ENCODE measurements at regions of chr1 and their contacts with region 1.

Region 1: DNA sequence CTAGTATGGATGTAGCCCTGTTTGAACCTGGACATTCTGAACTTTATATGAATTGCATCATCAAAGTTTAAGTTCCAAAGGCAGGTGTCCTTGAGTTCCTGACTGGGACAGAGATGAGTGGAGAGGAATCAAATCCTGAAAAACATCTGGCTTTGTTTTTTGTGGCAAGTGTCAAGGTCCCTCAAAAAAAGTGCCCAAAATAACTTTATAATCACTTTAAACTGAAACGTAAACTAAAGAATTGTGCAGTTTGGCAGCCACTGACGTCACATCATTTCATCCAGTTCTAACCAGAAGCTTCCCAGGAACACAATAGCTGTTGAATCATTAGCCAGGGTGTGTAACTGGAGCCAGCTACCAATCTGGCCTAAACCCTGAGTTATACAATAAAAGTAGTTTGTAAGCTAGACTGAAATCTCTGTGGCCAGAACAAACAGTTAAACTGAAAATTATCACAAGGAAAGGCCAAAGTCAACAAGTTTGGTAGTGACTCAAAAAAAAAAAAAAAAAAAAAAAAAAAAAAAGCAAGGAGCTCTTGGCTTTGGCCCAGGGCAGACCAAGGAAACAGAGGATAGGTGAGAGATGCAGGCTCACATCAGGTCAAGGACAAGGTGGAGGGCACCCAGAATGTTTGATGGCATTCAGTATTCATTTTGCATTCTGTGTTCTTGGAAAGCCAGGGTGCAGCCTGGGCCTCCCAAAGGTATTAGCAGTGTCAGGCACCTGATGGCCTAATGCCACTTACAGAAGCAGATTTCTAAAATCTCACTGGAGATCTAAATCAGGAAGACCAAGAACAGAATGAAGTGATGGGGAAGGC is 74.3 kb downstream of the TNFSF18 start:
- DNase-seq: peak; percentile 100
- ATAC-seq: peak; percentile 99
- H3K4me3 ChIP-seq: peak overlapping the region; percentile 1; the same call in 1 of the 2 replicates
- H3K27ac ChIP-seq: peak overlapping the region; percentile 71
- H3K4me1 ChIP-seq: peaks cover 30% of the 10 kb centered on the region
- H3K27me3 ChIP-seq: no peaks in the 10 kb centered on the region
- CTCF ChIP-seq: no peak

Region 2: DNA sequence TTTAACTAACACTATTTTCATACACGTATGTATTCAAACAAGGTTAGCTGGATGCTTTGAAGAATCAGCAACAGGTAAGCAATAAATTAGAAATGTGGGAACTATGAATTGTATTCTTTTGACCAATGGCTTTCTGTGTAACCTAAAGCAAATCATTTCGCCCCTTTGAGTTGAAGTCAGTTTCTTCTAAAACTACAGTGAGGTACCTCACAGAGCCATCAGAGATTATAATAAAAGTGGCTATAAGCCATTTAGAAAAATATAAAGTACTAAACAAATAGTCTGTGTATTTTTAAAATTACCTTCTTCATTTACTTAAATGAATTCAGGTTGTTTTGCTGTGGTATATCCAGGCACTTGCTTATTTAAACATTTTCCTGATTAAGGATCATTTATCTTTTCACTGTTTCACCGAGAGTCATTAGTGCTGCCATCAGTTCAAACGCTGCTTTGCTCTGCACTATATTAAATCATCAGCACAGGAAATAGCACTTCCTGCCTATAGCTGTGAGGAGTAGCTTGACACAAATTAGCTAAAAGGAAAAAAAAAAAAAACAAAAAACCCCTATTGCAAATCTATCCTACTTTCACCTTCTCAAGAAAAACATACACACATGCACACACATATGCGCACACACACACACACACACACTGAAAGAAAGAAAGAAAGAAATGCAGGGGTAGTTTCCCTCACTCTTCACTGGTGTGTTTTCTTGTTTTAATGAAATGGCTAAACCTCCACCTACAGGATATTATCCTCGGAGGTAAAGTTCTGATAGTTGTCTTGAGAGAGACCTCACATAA is 595.8 kb before region 1 on chr1:
- CTCF ChIA-PET with region 1: no interaction called
- POLR2A ChIA-PET with region 1: no interaction called
- intact Hi-C with region 1: no loop called
- DNase-seq: no peak
- ATAC-seq: peak; percentile 43; the same call in 1 of the 2 replicates
- H3K4me3 ChIP-seq: no peak overlapping the region
- H3K27ac ChIP-seq: no peak overlapping the region
- H3K4me1 ChIP-seq: no peaks in the 10 kb centered on the region
- H3K27me3 ChIP-seq: no peaks in the 10 kb centered on the region
- CTCF ChIP-seq: no peak

Region 3: DNA sequence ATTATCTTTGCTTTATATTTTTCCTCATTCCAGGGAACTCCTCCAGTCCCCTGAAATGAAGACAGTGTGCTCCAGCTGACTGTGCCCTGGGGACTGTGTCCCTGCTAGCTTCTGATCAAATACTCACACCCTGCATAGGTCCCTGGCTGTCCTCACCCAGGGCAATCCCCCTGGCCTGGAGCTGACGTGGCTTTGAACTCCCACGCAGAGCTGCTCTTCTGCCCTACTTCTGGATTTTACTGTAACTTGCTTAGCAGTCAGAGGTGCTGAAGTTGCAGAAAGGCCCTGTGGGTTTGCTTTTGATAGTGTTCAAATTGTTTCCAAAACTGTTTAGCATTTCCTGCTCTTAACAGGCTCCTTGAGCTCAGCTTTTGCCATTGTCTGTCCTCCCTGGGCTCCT is 131.1 kb before region 1 on chr1:
- CTCF ChIA-PET with region 1: no interaction called
- POLR2A ChIA-PET with region 1: no interaction called
- intact Hi-C with region 1: no loop called
- DNase-seq: no peak
- ATAC-seq: no peak
- H3K4me3 ChIP-seq: no peak overlapping the region
- H3K27ac ChIP-seq: no peak overlapping the region
- H3K4me1 ChIP-seq: no peaks in the 10 kb centered on the region
- H3K27me3 ChIP-seq: no peaks in the 10 kb centered on the region
- CTCF ChIP-seq: no peak

Region 4: GRCh38 chr1:172863031-172863430 is 113.4 kb before region 1 on chr1:
- CTCF ChIA-PET with region 1: interaction called, 5 read pairs
- POLR2A ChIA-PET with region 1: interaction called, 36 read pairs
- intact Hi-C with region 1: loop called (anchors 1 kb)
- DNase-seq: peak; percentile 30
- ATAC-seq: no peak
- H3K4me3 ChIP-seq: no peak overlapping the region
- H3K27ac ChIP-seq: no peak overlapping the region
- H3K4me1 ChIP-seq: peaks cover 9% of the 10 kb centered on the region
- H3K27me3 ChIP-seq: no peaks in the 10 kb centered on the region
- CTCF ChIP-seq: no peak

Region 5: GRCh38 chr1:172906778-172907592 is 69.4 kb before region 1 on chr1:
- CTCF ChIA-PET with region 1: interaction called, 13 read pairs
- POLR2A ChIA-PET with region 1: interaction called, 4 read pairs
- intact Hi-C with region 1: loop called (anchors 1 kb)
- DNase-seq: peak; percentile 99
- ATAC-seq: peak; percentile 25
- H3K4me3 ChIP-seq: no peak overlapping the region; the same call in 1 of the 2 replicates
- H3K27ac ChIP-seq: peak overlapping the region; percentile 77
- H3K4me1 ChIP-seq: peaks cover 64% of the 10 kb centered on the region
- H3K27me3 ChIP-seq: no peaks in the 10 kb centered on the region
- CTCF ChIP-seq: no peak

Region 6: DNA sequence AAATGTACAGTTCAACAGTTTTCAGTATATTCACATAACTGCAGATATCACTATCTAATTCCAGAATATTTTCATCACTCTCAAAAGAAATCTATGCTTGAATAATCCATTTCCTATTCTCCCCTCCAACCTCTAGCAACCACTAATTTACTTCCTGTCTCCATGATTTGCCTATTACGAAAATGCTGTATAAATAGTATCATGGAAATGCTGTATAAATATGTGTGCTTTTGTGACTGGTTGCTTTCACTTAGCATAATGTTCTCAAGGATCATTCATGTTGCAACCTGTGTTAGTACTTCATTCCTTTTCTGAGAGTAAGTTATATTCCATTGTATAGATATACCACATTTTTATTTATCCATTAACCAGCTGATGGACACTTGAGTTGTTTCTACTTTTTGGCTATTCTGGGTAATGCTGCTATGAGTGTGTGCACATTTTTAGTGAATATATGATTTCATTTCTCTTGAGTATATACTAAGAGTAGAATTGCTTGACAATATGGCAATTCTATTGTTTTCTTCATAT is 41.3 kb before region 1 on chr1:
- CTCF ChIA-PET with region 1: no interaction called
- POLR2A ChIA-PET with region 1: interaction called, 3 read pairs
- intact Hi-C with region 1: loop called (anchors 1 kb)
- DNase-seq: no peak
- ATAC-seq: no peak
- H3K4me3 ChIP-seq: no peak overlapping the region
- H3K27ac ChIP-seq: peak overlapping the region; percentile 70
- H3K4me1 ChIP-seq: peaks cover 34% of the 10 kb centered on the region
- H3K27me3 ChIP-seq: no peaks in the 10 kb centered on the region
- CTCF ChIP-seq: no peak

Region 7: DNA sequence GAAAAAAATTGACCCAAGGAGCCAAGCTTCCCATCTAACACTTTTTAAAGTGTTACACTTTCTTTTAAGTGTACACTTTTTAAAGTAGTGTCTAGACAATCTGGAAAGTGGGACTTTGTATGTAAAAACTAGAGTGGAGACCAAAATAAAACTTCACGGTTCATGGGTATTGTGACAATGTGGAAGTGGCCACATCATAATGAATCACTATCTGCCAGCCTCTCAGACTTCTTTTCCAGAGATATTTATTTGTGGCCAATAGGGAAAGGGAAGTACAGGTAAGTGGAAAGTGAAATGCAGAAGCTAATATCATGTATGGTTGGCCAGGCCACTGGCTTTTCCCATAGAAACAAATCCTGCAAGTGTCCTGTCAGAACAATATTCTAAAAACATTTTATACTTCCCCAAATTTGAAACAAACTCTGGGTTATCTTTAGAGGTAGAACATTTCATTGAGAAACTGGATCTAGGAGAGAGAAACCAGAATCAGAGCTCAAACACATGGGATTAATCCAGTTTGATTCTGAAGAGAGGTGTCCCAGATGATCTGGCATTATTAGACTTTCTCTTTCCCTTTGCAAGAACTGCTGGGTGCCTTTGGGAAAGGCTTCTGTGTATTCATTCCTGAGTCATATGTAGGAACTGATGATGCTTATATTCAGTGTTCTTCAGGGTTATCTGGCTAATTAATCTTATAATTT is 72.3 kb after region 1 on chr1:
- CTCF ChIA-PET with region 1: no interaction called
- POLR2A ChIA-PET with region 1: no interaction called
- intact Hi-C with region 1: loop called (anchors 1 kb)
- DNase-seq: peak; percentile 98
- ATAC-seq: peak; percentile 85
- H3K4me3 ChIP-seq: no peak overlapping the region
- H3K27ac ChIP-seq: peak overlapping the region; percentile 51
- H3K4me1 ChIP-seq: peaks cover 55% of the 10 kb centered on the region
- H3K27me3 ChIP-seq: no peaks in the 10 kb centered on the region
- CTCF ChIP-seq: no peak

Region 8: GRCh38 chr1:173202430-173203145 is 226.2 kb after region 1 on chr1:
- CTCF ChIA-PET with region 1: interaction called, 10 read pairs
- POLR2A ChIA-PET with region 1: no interaction called
- intact Hi-C with region 1: loop called (anchors 5 kb)
- DNase-seq: peak; percentile 98
- ATAC-seq: peak; percentile 93
- H3K4me3 ChIP-seq: no peak overlapping the region
- H3K27ac ChIP-seq: no peak overlapping the region
- H3K4me1 ChIP-seq: 0 out of 2 replicates have a peak, but pooled peaks cover 4% of the 10 kb centered on the region
- H3K27me3 ChIP-seq: no peaks in the 10 kb centered on the region
- CTCF ChIP-seq: peak; percentile 100

Region 9: DNA sequence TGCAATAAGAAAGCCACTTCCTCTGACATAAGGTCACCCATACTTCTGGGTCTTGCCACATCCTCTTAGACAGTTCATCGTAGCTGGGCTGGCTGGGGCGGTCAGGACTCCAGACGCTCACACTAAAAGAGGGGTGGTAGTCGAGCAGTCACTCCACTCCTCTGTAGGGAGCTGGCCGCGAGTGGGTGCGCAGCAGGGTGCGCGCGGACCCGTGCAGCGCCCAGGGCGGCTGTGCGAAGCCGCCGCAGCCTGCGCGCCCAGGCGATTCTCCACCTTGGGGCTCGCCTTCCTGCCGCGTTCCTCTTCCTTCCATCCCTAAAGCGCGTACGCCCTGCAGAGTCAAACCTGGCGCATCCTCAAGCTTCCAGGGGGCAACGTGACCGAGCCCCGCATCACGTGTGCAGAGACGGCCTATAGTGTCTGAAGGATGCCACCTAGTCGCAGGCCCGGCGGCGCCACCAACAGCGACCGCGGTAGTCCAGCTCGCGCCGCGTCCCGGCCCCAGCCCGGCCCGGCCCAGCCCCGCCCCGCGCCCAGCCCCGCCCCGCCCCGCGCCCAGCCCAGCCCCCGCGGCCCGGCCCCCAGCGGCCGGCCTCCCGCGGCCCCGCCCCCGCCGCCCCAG is 500.3 kb after region 1 on chr1:
- CTCF ChIA-PET with region 1: no interaction called
- POLR2A ChIA-PET with region 1: interaction called, 14 read pairs
- intact Hi-C with region 1: no loop called
- DNase-seq: peak; percentile 100
- ATAC-seq: peak; percentile 77
- H3K4me3 ChIP-seq: peak overlapping the region; percentile 74
- H3K27ac ChIP-seq: peak overlapping the region; percentile 68
- H3K4me1 ChIP-seq: peaks cover 60% of the 10 kb centered on the region
- H3K27me3 ChIP-seq: no peaks in the 10 kb centered on the region
- CTCF ChIP-seq: no peak; the same call in 1 of the 2 replicates

Measured in PC-3 (cell line).